Activated CD8-positive, alpha-beta T cell treated with anti-CD3 and anti-CD28 coated beads for 36 hours (primary cell): ENCODE measurements at regions of chr12 and their contacts with region 1.

Region 1: DNA sequence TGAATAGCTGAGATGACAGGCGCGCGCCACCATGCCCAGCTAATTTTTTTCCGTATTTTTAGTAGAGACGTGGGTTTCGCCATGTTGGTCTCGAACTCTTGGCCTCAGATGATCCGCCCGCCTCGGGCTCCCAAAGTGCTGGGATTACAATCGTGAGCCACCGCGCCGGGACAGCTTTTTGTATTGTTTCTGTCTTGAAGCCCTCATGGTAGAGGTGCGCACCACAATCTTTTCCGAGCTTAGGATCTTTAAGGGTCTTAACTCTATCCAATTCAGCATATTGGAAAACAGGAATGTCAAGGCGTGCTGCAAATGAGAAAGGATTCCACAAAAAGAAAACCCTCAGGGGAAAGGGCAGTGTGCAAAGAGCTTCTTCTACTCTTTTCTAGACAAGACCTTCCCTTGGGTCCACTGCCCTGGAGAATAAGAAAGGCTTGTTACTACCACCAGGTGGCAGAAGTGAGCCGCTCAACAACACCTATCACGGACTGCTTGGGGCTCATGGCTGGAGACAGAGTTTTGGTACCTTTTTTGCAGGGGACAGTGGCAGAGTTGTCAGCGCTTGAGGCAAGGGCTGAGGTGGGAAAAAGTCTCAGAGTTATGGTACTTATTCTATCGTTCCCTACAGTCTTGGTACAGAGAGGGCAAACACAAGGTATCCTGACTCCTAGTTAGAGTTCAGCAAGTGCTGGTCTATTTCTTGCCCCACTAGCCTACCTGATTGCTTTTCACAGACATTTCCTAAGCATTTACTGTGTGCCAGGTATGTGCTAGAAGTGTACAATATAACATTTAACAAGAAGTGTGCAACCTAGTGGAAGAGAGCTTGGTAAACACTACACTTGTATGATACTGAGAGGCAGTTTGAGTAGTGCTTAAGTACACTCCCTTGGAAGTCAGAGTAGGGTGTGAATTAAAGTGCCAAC is 16.4 kb upstream of the SP7 start:
- DNase-seq: peak; percentile 93
- ATAC-seq: peak; percentile 99
- H3K4me3 Mint-ChIP-seq: no peak overlapping the region
- H3K27ac Mint-ChIP-seq: no peak overlapping the region
- H3K4me1 Mint-ChIP-seq: peaks cover 10% of the 10 kb centered on the region
- H3K27me3 Mint-ChIP-seq: no peaks in the 10 kb centered on the region
- CTCF ChIP-seq: peak; percentile 83

Region 2: DNA sequence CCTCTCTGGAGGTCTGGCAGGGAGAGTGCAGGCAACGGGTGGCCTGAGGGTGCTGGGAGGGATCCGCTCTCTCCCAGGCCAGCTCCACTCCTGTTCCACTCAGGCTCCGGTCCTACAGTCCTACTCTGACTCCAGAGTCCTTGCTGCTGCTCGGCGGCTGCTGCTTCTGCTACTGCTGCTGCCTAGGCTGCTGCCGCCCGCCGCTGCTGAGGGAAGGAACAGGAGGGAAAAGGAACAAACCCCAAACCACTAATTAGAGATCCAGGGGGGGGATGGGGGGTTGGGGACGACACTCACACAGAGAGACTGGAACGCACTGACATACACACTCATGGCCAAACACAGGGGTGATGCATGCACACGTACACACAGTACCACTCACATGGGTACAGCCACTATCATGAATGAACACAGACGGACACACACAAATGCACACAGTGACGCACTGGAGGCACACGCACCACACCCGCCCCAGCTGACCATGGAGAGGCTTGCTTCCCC is 16.4 kb before region 1 on chr12 and contains the start of gene SP7:
- CTCF ChIA-PET with region 1: interaction called, 293 read pairs
- POLR2A ChIA-PET with region 1: no interaction called
- intact Hi-C with region 1: no loop called
- DNase-seq: no peak
- ATAC-seq: peak; percentile 23
- H3K4me3 Mint-ChIP-seq: no peak within 1 kb of the TSS
- H3K27ac Mint-ChIP-seq: no peak within 1 kb of the TSS
- H3K4me1 Mint-ChIP-seq: peaks cover 13% of the 10 kb centered on the region
- H3K27me3 Mint-ChIP-seq: peaks cover 42% of the 10 kb centered on the region
- CTCF ChIP-seq: no peak
- total RNA-seq, gene SP7: not detected

Region 3: GRCh38 chr12:53379389-53380103 is 27.0 kb after region 1 on chr12:
- CTCF ChIA-PET with region 1: interaction called, 51 read pairs
- POLR2A ChIA-PET with region 1: interaction called, 4 read pairs
- intact Hi-C with region 1: no loop called
- DNase-seq: peak; percentile 99
- ATAC-seq: peak; percentile 76
- H3K4me3 Mint-ChIP-seq: no peak overlapping the region
- H3K27ac Mint-ChIP-seq: no peak overlapping the region
- H3K4me1 Mint-ChIP-seq: peaks cover 36% of the 10 kb centered on the region
- H3K27me3 Mint-ChIP-seq: no peaks in the 10 kb centered on the region
- CTCF ChIP-seq: no peak

Region 4: GRCh38 chr12:53414756-53415417 is 62.3 kb after region 1 on chr12:
- CTCF ChIA-PET with region 1: interaction called, 187 read pairs
- POLR2A ChIA-PET with region 1: interaction called, 3 read pairs
- intact Hi-C with region 1: no loop called
- DNase-seq: no peak
- ATAC-seq: no peak
- H3K4me3 Mint-ChIP-seq: no peak overlapping the region
- H3K27ac Mint-ChIP-seq: peak overlapping the region; percentile 1
- H3K4me1 Mint-ChIP-seq: peaks cover 65% of the 10 kb centered on the region
- H3K27me3 Mint-ChIP-seq: no peaks in the 10 kb centered on the region
- CTCF ChIP-seq: no peak

Region 5: GRCh38 chr12:53476769-53477209 is 124.2 kb after region 1 on chr12:
- CTCF ChIA-PET with region 1: interaction called, 26 read pairs
- POLR2A ChIA-PET with region 1: interaction called, 4 read pairs
- intact Hi-C with region 1: no loop called
- DNase-seq: no peak
- ATAC-seq: no peak
- H3K4me3 Mint-ChIP-seq: no peak overlapping the region
- H3K27ac Mint-ChIP-seq: peak overlapping the region; percentile 34
- H3K4me1 Mint-ChIP-seq: peaks cover 52% of the 10 kb centered on the region
- H3K27me3 Mint-ChIP-seq: no peaks in the 10 kb centered on the region
- CTCF ChIP-seq: peak; percentile 43

Region 6: DNA sequence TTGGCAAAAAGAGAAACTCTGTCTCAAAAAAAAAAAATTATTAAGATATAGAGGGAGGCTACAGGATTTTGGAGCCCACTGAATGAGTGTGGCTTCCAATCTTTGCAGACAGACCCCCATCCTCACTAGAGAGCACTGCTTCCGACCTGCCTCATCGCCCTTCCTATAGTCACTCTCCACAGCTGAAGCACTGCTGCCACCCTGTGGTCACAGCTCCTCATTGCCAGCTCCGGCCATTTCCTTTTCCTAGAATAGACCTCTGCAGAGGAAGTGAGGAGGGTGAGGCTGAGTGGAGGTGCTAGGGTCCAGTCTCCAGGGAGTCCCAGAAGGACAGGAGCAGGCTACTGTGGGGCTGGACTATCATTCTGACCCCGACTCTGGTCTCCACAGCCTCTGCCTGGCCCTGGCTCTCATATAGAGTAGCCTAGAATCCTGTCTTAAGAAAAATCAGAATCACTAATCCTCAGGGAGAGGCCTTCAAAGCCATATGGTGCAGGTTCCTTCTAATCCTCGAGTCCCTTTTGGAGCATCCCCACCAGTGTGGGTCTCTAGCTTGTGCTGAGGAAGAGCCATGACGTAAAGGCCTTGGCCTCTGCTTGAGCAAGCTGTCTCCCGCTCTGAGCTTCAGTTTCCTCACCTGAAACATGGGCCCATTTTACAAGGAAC is 156.1 kb after region 1 on chr12:
- CTCF ChIA-PET with region 1: interaction called, 53 read pairs
- POLR2A ChIA-PET with region 1: interaction called, 3 read pairs
- intact Hi-C with region 1: loop called (anchors 10 kb)
- DNase-seq: peak; percentile 93
- ATAC-seq: peak; percentile 100
- H3K4me3 Mint-ChIP-seq: no peak overlapping the region
- H3K27ac Mint-ChIP-seq: peak overlapping the region; percentile 58
- H3K4me1 Mint-ChIP-seq: peaks cover 12% of the 10 kb centered on the region
- H3K27me3 Mint-ChIP-seq: no peaks in the 10 kb centered on the region
- CTCF ChIP-seq: peak; percentile 92

Region 7: GRCh38 chr12:53738406-53739213 is 386.0 kb after region 1 on chr12:
- CTCF ChIA-PET with region 1: no interaction called
- POLR2A ChIA-PET with region 1: no interaction called
- intact Hi-C with region 1: no loop called
- DNase-seq: peak; percentile 57
- ATAC-seq: peak; percentile 80
- H3K4me3 Mint-ChIP-seq: peak overlapping the region; percentile 45
- H3K27ac Mint-ChIP-seq: no peak overlapping the region
- H3K4me1 Mint-ChIP-seq: peaks cover 19% of the 10 kb centered on the region
- H3K27me3 Mint-ChIP-seq: peaks cover 39% of the 10 kb centered on the region
- CTCF ChIP-seq: no peak